Posterior vena cava (tissue), 2 donors: ENCODE measurements at regions of chr11 and their contacts with region 1.

Region 1: DNA sequence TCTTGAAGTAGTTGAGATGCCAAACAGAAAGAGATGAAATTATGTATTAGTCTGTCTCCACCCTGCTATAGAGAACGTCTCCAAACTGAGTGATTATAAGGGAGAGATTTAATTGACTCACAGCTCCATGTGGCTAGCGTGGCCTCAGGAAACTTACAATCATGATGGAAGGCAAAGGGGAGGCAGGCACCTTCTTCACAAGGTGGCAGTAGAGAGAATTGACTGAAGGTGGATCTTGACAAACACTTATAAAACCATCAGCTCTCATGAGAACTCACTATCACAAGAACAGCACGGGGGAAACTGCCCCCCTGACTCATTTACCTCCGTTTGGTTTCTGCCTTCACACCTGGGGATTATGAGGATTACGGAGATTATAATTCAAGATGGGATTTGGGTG is 794.0 kb downstream of the CNTN5 start:
- DNase-seq: no peak

Region 2: DNA sequence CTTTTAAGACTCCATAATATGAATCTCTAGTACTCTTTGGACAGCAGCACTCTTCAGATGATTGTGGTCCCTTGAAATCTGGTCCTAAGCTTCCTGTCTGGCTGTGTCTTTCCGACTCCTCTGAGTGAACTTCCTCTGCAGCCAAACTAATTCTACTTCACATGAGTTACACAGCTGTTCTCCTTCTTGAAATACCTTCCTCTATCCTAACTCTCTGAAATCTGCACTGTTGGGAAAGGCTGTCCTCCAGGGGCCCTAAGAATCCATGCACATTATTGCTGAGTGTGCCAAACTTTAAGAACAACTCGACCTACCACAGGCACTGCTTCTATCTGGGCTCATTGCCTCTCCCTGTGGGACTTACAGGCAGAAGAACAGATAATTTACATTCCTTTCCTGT is 655.1 kb after region 1 on chr11:
- intact Hi-C with region 1: loop called in 1 of 2 experiments (anchors 5 kb)
- DNase-seq: no peak